ENCODE measurements at regions of chr2 and their contacts with region 1.

Region 1: DNA sequence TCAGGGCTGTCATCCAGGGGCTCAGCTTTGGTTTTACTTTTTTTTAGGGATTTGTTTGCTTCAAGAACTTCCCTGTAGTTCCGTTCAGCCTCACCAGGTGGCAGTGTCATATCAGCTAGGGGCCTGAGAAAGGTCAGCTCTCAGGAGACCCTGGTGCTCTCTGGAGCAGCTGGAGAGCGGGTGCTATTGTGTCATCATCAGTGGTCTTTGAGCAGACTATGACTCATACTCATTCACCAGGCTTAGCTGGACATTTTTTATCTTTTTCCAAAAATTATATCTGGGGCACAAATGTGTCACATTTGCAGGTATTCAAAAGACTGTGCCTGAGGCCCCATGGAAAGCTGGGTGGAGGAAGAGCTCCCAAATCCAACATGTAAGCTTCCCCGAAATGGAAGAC is 24.4 kb downstream of the ZNF892 start:
- DNase-seq: peak; percentile 94
- ATAC-seq: peak; percentile 91
- H3K4me3 Mint-ChIP-seq: no peak overlapping the region
- H3K27ac Mint-ChIP-seq: no peak overlapping the region
- H3K4me1 Mint-ChIP-seq: no peaks in the 10 kb centered on the region
- H3K27me3 Mint-ChIP-seq: no peaks in the 10 kb centered on the region
- CTCF ChIP-seq: peak; percentile 69

Region 2: DNA sequence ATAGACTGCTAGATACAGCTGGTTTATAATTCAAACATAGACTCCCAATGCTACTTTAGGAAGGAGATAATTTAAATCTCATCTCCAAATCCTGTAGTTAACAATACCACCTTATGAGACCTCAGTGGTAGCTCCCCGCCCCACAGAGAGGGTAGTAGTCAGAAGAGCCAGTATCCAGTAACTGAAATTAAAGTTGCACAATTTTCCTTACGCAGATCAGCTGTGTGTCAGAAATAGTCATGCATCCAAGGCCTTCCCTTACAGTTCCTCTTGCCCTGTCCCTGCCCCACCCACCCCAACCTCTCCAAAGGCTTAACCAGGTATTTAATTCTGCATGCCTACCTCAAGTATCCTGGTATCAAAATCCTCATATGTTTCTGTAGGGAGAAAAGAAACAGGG is 125.6 kb before region 1 on chr2:
- CTCF ChIA-PET with region 1: no interaction called
- POLR2A ChIA-PET with region 1: no interaction called
- DNase-seq: no peak
- ATAC-seq: no peak
- H3K4me3 Mint-ChIP-seq: no peak overlapping the region
- H3K27ac Mint-ChIP-seq: no peak overlapping the region
- H3K4me1 Mint-ChIP-seq: no peaks in the 10 kb centered on the region
- H3K27me3 Mint-ChIP-seq: no peaks in the 10 kb centered on the region
- CTCF ChIP-seq: no peak

Region 3: GRCh38 chr2:95149397-95149984 is 82.2 kb before region 1 on chr2:
- CTCF ChIA-PET with region 1: no interaction called
- POLR2A ChIA-PET with region 1: no interaction called
- DNase-seq: no peak
- ATAC-seq: no peak
- H3K4me3 Mint-ChIP-seq: no peak overlapping the region
- H3K27ac Mint-ChIP-seq: no peak overlapping the region
- H3K4me1 Mint-ChIP-seq: no peaks in the 10 kb centered on the region
- H3K27me3 Mint-ChIP-seq: peaks cover 23% of the 10 kb centered on the region
- CTCF ChIP-seq: no peak

Region 4: DNA sequence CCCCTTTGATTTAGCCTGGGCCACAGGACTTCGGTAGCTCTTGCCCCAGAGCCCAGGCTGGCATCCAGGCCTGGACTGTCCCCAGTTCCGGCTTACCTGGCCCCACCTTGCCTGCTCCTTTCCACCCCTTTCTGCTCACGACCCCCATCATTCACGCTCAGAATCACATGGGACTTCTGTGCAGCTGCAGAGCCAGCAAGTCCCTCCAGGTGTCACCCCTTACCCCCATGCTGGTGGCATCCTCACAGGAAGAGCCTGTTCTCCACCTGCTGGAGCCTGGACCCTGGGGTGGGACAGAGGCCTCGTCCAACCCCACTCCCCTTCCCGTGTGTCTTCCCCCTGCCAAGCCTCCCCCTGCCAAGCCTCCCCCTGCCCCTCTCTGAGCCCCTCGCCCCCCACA is 57.5 kb after region 1 on chr2:
- CTCF ChIA-PET with region 1: interaction called, 32 read pairs
- POLR2A ChIA-PET with region 1: no interaction called
- DNase-seq: peak; percentile 25
- ATAC-seq: peak; percentile 76
- H3K4me3 Mint-ChIP-seq: no peak overlapping the region
- H3K27ac Mint-ChIP-seq: no peak overlapping the region
- H3K4me1 Mint-ChIP-seq: 0 out of 2 replicates have a peak, but pooled peaks cover 6% of the 10 kb centered on the region
- H3K27me3 Mint-ChIP-seq: peaks cover 5% of the 10 kb centered on the region
- CTCF ChIP-seq: no peak

Region 5: DNA sequence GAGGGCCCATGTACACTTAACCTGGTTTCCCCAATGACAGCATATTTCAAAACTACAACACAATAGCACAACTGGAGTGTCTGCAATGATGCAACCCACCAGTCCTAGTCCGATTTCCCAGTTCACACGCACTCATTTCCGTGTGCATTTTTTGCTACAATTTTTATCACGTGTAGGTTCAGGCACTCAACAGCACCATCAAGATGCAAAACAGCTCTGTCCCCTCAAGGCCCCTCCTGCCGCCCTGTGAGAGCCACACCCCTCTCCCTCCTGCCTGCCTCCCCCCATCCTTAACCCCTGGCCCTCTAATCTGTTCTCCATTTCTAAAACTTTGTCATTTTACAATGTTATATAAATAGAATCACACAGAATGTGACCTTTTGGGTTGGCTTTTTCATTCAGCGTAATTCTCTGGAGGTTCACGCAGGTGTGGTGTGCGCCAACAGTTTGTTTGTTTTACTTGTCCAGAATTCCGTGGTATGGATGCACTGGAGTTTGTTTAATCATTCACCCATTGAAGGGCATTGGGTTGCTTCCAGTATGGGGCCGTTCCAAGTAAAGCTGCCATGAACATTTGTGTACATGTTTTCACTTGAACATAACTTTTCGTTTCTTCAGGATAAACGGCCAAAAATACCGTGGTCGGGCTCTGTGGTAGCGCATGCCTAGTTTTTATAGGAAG is 73.8 kb after region 1 on chr2:
- CTCF ChIA-PET with region 1: interaction called, 42 read pairs
- POLR2A ChIA-PET with region 1: no interaction called
- DNase-seq: no peak
- ATAC-seq: no peak
- H3K4me3 Mint-ChIP-seq: no peak overlapping the region
- H3K27ac Mint-ChIP-seq: no peak overlapping the region
- H3K4me1 Mint-ChIP-seq: no peaks in the 10 kb centered on the region; the same call in 1 of the 2 replicates
- H3K27me3 Mint-ChIP-seq: no peaks in the 10 kb centered on the region
- CTCF ChIP-seq: no peak

Region 6: GRCh38 chr2:95323347-95324185 is 91.8 kb after region 1 on chr2:
- CTCF ChIA-PET with region 1: interaction called, 107 read pairs
- POLR2A ChIA-PET with region 1: no interaction called
- DNase-seq: peak; percentile 72
- ATAC-seq: peak; percentile 74
- H3K4me3 Mint-ChIP-seq: no peak overlapping the region
- H3K27ac Mint-ChIP-seq: no peak overlapping the region
- H3K4me1 Mint-ChIP-seq: 0 out of 2 replicates have a peak, but pooled peaks cover 2% of the 10 kb centered on the region
- H3K27me3 Mint-ChIP-seq: no peaks in the 10 kb centered on the region
- CTCF ChIP-seq: peak; percentile 68; the same call in 1 of the 2 replicates

Region 7: GRCh38 chr2:95345566-95346230 is 114.0 kb after region 1 on chr2:
- CTCF ChIA-PET with region 1: interaction called, 33 read pairs
- POLR2A ChIA-PET with region 1: no interaction called
- DNase-seq: peak; percentile 89
- ATAC-seq: peak; percentile 85
- H3K4me3 Mint-ChIP-seq: peak overlapping the region; percentile 73
- H3K27ac Mint-ChIP-seq: no peak overlapping the region
- H3K4me1 Mint-ChIP-seq: no peaks in the 10 kb centered on the region
- H3K27me3 Mint-ChIP-seq: peaks cover 67% of the 10 kb centered on the region
- CTCF ChIP-seq: peak; percentile 79

Region 8: DNA sequence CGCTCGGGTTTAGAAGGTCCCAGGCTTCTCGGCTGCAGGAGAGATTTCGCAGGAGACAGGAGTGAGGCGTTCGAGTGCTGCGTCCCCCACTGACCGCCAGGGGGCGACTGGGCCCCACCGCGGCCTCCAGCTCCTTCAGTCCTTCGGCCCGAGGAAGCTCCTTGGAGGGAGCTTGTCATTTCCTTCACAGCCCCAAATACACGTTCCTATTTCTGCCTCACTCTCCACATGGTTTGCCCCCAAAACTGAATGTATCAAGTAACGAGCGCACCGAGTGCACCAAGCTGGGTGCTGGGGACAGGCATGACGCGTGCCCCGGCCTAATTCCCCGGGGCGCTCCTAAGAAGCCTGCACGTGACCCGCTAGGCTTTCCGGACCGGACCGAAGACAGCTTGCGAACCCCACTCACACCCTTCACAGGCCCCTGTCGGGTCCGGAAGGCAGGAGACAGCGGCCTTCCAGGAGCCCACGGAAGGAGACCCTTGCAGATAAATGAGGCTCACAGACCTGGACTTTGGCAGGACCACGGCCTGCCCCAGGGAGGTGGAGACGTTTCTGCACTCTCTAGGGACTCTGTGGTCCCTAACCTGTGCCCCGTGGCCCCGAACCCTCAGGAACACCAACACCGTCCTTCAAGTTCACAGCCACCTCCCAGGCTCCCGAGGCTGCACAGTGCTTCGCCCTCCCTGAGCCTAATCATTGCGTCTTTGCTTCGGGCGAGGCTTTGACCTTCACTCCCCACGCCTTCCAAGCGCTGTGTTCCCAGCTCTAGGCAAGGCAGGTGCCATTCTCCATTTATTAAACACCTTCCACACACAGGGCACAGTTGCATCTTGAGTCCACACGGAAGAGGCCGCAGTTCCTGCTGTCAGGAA is 157.8 kb after region 1 on chr2:
- CTCF ChIA-PET with region 1: interaction called, 24 read pairs
- POLR2A ChIA-PET with region 1: no interaction called
- DNase-seq: peak; percentile 86
- ATAC-seq: peak; percentile 86
- H3K4me3 Mint-ChIP-seq: no peak overlapping the region
- H3K27ac Mint-ChIP-seq: no peak overlapping the region
- H3K4me1 Mint-ChIP-seq: no peaks in the 10 kb centered on the region
- H3K27me3 Mint-ChIP-seq: peaks cover 18% of the 10 kb centered on the region
- CTCF ChIP-seq: peak; percentile 96

Measured in WTC11 (cell line).